Kidney (tissue), 22 donors: ENCODE measurements at regions of chr2 and their contacts with region 1.

Region 1: DNA sequence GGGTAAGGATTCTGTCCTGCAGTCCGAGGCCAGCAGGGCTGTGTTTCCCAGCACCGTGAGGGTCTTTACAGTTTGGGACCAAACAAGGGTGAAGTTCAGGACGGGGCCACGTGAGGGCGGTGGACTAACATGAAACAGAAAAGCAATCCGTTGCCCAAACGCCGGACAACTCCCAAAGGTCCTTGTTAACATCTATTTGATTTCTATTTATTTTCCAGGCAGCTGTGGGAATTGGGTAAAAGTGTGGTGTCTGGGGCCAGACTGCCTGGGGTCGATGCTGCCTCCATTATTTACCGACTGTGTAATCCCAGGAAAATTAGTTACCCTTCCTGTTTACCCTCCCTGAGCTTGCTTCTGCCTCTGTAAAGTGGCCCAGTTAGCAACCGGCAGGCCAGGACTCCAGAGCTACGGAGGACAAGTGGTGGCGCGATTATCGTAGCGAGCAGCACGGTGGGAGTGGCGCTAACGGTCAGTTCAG is 66.3 kb upstream of the TCF7L1 start:
- DNase-seq: peak; percentile 88 to 92 (median 89)
- H3K4me3 ChIP-seq: peak overlapping the region in 2 of 3 donors; percentile 5 to 52
- H3K27ac ChIP-seq: no peak overlapping the region
- H3K4me1 ChIP-seq: no peaks in the 10 kb centered on the region
- H3K27me3 ChIP-seq: no peaks in the 10 kb centered on the region
- CTCF ChIP-seq: peak; percentile 71

Region 2: GRCh38 chr2:85308896-85309555 is 242.1 kb after region 1 on chr2:
- intact Hi-C with region 1: loop called (anchors 10 kb)
- DNase-seq: peak; percentile 95 to 96 (median 96)
- H3K4me3 ChIP-seq: peak overlapping the region in 2 of 3 donors; percentile 52 to 63
- H3K27ac ChIP-seq: peak overlapping the region; percentile 65 to 76
- H3K4me1 ChIP-seq: peaks cover 12% of the 10 kb centered on the region in 3 donors
- H3K27me3 ChIP-seq: no peaks in the 10 kb centered on the region
- CTCF ChIP-seq: no peak